ENCODE measurements at regions of chr6 and their contacts with region 1.

Region 1: DNA sequence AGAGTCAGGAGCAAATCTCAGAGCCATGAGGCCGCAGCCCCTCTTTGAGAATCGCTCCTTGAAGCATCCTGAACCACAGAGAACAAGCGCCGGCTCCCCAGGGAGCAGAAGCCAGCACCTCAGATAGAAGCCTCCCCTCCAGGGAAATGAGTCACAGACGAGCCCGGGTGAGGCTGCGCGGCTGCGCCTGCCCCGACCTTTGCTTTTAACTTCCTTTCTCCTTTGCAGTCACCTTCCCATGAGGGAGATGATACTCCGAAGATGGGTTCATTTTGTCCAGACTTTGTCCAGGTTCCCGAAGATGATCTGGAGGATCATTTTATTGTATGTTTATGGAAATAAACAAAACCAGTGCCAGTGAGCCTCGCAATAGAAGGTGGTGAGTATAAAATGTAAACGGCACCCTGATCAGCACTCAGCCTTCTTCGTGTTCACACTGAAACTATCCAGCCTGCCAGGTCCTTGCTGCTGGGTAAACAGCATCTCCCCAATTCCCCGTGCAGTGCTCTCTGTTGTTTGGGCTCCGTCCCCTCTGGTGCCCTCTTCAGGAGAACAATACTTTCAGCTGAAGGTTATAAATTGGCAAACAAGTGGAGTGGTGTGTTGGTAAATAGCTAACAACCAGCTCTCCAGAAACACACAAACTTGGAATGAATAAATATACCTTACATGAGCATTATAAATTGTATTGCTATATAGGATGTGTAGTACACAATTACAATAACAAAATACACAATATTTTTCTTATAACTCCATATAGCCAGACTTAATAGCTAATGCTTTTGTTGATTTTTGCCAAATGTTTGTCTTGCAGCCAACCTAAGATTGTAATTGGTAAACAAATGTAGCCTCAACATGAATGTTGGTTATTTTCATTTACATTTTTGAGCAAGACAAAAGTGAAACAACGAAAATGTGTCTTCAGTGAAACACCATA is 41.4 kb upstream of the TMEM181 start:
- DNase-seq: peak; percentile 63 to 78 (median 74)
- ATAC-seq: peak; percentile 83
- H3K4me3 ChIP-seq: no peak overlapping the region
- H3K27ac ChIP-seq: no peak overlapping the region
- H3K4me1 ChIP-seq: peaks cover 6% of the 10 kb centered on the region
- H3K27me3 ChIP-seq: no peaks in the 10 kb centered on the region
- CTCF ChIP-seq: peak; percentile 16 to 85 (median 67)
- POLR2A ChIP-seq: no peak

Region 2: DNA sequence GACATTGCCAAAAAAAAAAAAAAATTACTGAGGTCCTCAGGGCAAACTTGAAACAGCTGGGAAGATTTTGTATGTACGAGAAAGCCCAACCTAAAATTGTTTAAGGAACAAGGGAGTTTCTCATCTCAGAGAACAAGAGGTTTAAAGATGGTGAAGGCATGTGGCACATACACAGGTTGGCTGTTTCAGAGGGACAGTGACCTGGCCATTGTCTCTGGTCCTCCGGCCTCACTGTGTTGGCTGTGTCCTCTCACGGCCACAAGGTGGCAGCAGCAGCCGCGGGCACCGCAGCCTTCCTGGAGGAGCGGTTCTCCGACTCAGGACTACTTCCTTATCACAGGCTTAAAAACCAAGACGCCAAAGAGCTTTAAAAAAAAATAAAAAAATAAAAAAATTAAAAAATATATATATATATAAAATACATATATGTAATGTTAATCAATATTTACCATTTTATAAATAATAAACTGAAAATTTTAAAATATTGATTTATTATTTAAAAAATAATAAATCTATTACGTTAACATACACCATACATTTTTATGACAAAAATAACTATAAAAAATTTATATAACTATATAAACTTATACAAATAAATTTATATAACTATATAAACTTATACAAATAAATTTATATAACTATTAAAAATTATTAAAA is 297.5 kb before region 1 on chr6:
- intact Hi-C with region 1: loop called (anchors 10 kb)
- DNase-seq: peak; percentile 80 to 82 (median 80)
- ATAC-seq: peak; percentile 96
- H3K4me3 ChIP-seq: no peak overlapping the region
- H3K27ac ChIP-seq: no peak overlapping the region
- H3K4me1 ChIP-seq: no peaks in the 10 kb centered on the region
- H3K27me3 ChIP-seq: no peaks in the 10 kb centered on the region
- CTCF ChIP-seq: peak; percentile 76 to 100 (median 94)
- POLR2A ChIP-seq: no peak

Measured in body of pancreas (tissue), 4 donors.